ENCODE measurements at regions of chr7 and their contacts with region 1.

Region 1: GRCh38 chr7:41940760-41941343 is 238.0 kb upstream of the INHBA start:
- H3K4me3 ChIP-seq: no peak overlapping the region
- H3K27ac ChIP-seq: no peak overlapping the region
- H3K4me1 ChIP-seq: no peaks in the 10 kb centered on the region
- CTCF ChIP-seq: peak; percentile 43

Region 2: DNA sequence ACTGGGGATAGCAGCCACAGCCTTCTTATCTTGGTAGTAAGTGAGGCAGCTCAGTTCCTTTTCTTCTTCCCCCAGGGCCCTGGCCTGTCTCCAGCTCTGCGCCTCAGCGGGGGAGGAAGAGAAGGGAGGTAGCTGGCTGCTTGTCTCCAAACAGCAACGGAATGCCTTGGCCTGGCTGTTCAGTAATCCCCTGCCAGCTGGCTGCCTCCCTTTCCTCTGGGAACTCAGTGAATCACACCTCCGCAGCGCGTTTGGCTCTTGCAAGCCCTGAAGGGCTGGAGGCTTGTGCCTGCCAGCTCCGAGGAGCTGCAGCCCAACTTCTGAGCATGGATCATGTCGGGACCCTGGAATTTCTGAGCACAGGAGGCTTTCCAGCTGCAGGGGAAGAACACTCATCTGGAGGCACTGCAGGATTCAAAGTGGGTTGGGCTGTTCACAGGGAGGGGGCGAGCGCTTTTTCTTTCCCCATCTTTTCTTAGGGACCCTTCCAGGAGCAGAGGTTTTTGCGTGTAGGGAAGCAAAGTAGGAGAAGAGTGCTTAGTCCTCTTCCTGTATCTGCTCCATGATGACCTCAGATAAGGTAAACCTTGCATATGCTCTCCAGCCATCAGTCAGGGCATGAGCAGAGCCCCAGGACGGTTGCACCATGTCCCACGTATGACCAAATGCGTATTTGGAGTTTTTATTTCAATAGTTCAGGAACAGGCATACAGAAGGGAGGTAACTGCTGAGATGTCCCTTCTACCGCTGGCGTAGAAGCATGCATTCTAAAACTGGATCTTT is 15.2 kb after region 1 on chr7:
- CTCF ChIA-PET with region 1: interaction called, 17 read pairs
- POLR2A ChIA-PET with region 1: no interaction called
- H3K4me3 ChIP-seq: no peak overlapping the region
- H3K27ac ChIP-seq: peak overlapping the region; percentile 19; the same call in 1 of the 2 replicates
- H3K4me1 ChIP-seq: peaks cover 11% of the 10 kb centered on the region; the same call in 1 of the 2 replicates
- CTCF ChIP-seq: no peak

Region 3: GRCh38 chr7:42690794-42691639 is 750.2 kb after region 1 on chr7:
- CTCF ChIA-PET with region 1: interaction called, 14 read pairs
- POLR2A ChIA-PET with region 1: no interaction called
- H3K4me3 ChIP-seq: no peak overlapping the region
- H3K27ac ChIP-seq: no peak overlapping the region
- H3K4me1 ChIP-seq: no peaks in the 10 kb centered on the region
- CTCF ChIP-seq: peak; percentile 69

Region 4: DNA sequence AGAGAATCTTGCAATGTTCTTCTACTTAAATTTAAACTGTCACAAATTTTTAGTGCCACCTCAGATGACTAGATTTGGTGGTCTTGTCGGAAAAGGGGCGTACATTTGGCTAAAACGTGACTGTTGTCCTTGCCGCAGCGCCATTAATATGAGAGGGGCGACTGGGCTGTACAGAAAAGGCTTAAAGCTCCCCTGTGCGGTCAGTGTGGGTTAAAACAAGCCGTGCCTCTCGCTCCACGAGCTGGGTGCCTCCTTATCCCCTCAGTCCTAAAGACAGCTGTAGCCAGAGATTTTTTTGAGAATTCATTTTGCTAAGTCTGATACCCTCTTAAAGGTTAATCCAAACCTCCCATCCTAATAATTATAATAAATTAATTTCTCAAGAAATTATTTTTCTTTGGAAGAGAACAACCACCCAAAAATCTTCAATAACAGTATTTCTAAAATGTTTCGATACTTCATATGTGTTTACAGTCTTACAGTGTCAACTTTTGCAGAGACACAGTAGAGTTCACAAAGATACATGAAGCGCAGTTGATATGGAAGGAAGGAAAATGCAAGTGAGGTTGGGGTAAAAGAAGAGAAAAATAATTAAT is 902.5 kb after region 1 on chr7:
- CTCF ChIA-PET with region 1: interaction called, 46 read pairs
- POLR2A ChIA-PET with region 1: no interaction called
- H3K4me3 ChIP-seq: no peak overlapping the region
- H3K27ac ChIP-seq: no peak overlapping the region
- H3K4me1 ChIP-seq: no peaks in the 10 kb centered on the region
- CTCF ChIP-seq: 0 out of 2 replicates have a peak, but pooled peaks have one; percentile 27

Region 5: GRCh38 chr7:42886129-42886528 is 945.3 kb after region 1 on chr7:
- CTCF ChIA-PET with region 1: interaction called, 20 read pairs
- POLR2A ChIA-PET with region 1: no interaction called
- H3K4me3 ChIP-seq: no peak overlapping the region
- H3K27ac ChIP-seq: no peak overlapping the region
- H3K4me1 ChIP-seq: peaks cover 6% of the 10 kb centered on the region; the same call in 1 of the 2 replicates
- CTCF ChIP-seq: no peak

Region 6: GRCh38 chr7:43834463-43835251 is 1893.8 kb after region 1 on chr7:
- CTCF ChIA-PET with region 1: interaction called, 10 read pairs
- POLR2A ChIA-PET with region 1: no interaction called
- H3K4me3 ChIP-seq: no peak overlapping the region
- H3K27ac ChIP-seq: no peak overlapping the region
- H3K4me1 ChIP-seq: no peaks in the 10 kb centered on the region; the same call in 1 of the 2 replicates
- CTCF ChIP-seq: no peak